ENCODE measurements at regions of chr7 and their contacts with region 1.

Region 1: DNA sequence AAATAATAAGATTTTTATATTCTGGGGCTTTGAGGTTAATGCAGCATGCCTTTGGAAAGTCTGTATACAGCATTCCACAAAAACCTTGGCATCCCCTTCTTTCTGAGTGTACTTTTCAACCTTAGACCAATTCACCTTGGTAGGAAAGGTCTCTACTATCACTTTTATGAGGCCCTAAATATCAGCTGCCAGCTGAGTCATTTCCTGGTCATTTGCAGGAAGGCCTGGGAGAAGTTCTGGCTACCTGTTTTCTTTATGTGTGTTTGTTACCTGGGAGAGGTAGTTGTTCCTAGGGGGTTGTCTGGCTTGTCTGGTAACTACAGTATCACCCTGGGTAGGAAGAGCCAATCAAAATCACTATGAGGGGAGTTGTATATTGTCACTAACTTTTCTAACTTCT is 4.1 kb downstream of the SPAM1 start:
- DNase-seq: no peak
- H3K4me3 ChIP-seq: no peak overlapping the region
- H3K27ac ChIP-seq: no peak overlapping the region
- H3K4me1 ChIP-seq: no peaks in the 10 kb centered on the region
- H3K27me3 ChIP-seq: no peaks in the 10 kb centered on the region
- CTCF ChIP-seq: no peak
- POLR2A ChIP-seq: no peak

Region 2: GRCh38 chr7:123204206-123204835 is 724.8 kb before region 1 on chr7:
- intact Hi-C with region 1: loop called (anchors 5 kb)
- DNase-seq: no peak
- H3K4me3 ChIP-seq: no peak overlapping the region
- H3K27ac ChIP-seq: no peak overlapping the region
- H3K4me1 ChIP-seq: no peaks in the 10 kb centered on the region
- H3K27me3 ChIP-seq: no peaks in the 10 kb centered on the region
- CTCF ChIP-seq: no peak
- POLR2A ChIP-seq: no peak

Region 3: GRCh38 chr7:123770378-123770777 is 158.7 kb before region 1 on chr7:
- intact Hi-C with region 1: no loop called
- DNase-seq: no peak
- H3K4me3 ChIP-seq: no peak overlapping the region
- H3K27ac ChIP-seq: no peak overlapping the region
- H3K4me1 ChIP-seq: no peaks in the 10 kb centered on the region
- H3K27me3 ChIP-seq: no peaks in the 10 kb centered on the region
- CTCF ChIP-seq: no peak
- POLR2A ChIP-seq: no peak

Region 4: DNA sequence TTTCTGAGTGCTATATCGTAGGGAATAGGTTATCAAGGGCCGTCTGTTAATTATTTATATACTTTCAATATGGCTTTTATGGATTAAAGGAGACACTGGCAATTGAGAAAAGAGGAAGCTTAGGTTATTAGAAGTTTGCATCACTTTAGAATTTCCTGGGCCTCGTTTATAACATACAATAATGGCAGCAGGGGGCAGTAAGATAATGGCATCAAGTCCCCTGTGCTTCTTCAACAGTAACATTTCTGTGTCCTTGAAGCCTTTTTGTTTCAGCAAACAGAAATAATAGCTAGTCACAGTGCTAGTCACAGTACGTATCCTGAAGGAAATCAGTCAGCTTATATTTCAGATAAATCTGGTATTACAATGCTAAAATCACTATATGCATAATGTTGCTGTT is 37.8 kb after region 1 on chr7:
- intact Hi-C with region 1: no loop called
- DNase-seq: no peak
- H3K4me3 ChIP-seq: no peak overlapping the region
- H3K27ac ChIP-seq: no peak overlapping the region
- H3K4me1 ChIP-seq: no peaks in the 10 kb centered on the region
- H3K27me3 ChIP-seq: no peaks in the 10 kb centered on the region
- CTCF ChIP-seq: no peak
- POLR2A ChIP-seq: no peak

Region 5: GRCh38 chr7:125222596-125222995 is 1293.5 kb after region 1 on chr7:
- intact Hi-C with region 1: loop called (anchors 5 kb)
- DNase-seq: no peak
- H3K4me3 ChIP-seq: no peak overlapping the region
- H3K27ac ChIP-seq: no peak overlapping the region
- H3K4me1 ChIP-seq: no peaks in the 10 kb centered on the region
- H3K27me3 ChIP-seq: no peaks in the 10 kb centered on the region
- CTCF ChIP-seq: no peak
- POLR2A ChIP-seq: no peak